B cell (primary cell): ENCODE measurements at regions of chr6 and their contacts with region 1.

Region 1: GRCh38 chr6:137873273-137873762 is 6.3 kb downstream of the TNFAIP3 start:
- DNase-seq: peak; percentile 91
- ATAC-seq: peak; percentile 70
- H3K4me3 ChIP-seq: peak overlapping the region in 2 of 5 experiments; percentile 4 to 17
- H3K4me3 Mint-ChIP-seq: peak overlapping the region; percentile 94
- H3K27ac ChIP-seq: peak overlapping the region; percentile 51 to 96
- H3K27ac Mint-ChIP-seq: peak overlapping the region; percentile 80
- H3K4me1 ChIP-seq: peaks cover 58 to 64% of the 10 kb centered on the region in 2 donors
- H3K4me1 Mint-ChIP-seq: peaks cover 70% of the 10 kb centered on the region
- H3K27me3 ChIP-seq: no peaks in the 10 kb centered on the region
- H3K27me3 Mint-ChIP-seq: no peaks in the 10 kb centered on the region
- CTCF ChIP-seq: no peak

Region 2: DNA sequence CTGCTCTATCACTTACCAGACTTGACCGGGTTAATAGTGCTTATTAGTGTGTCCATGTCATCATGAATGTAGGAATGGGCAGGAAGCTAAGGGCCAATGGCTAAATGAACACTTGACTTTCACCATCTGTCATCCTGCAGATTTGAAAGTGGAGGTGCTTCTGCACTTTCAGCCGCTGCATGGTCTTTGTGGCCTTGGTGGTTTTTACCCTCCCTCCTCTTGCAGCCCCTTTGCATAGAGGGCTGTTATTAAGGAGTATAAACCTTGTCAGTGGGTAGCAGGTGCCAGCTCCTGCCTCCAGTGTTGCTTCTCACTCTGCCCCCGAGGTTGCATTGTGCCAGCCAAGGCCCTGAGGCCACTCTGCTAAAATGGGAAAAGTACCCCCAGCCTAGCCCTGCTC is 128.4 kb before region 1 on chr6:
- CTCF ChIA-PET with region 1: no interaction called
- POLR2A ChIA-PET with region 1: no interaction called
- intact Hi-C with region 1: loop called (anchors 5 kb)
- DNase-seq: peak; percentile 21
- ATAC-seq: no peak
- H3K4me3 ChIP-seq: no peak overlapping the region
- H3K4me3 Mint-ChIP-seq: peak overlapping the region; percentile 8
- H3K27ac ChIP-seq: no peak overlapping the region
- H3K27ac Mint-ChIP-seq: peak overlapping the region; percentile 15
- H3K4me1 ChIP-seq: peaks cover 30 to 36% of the 10 kb centered on the region in 2 donors
- H3K4me1 Mint-ChIP-seq: peaks cover 35% of the 10 kb centered on the region
- H3K27me3 ChIP-seq: no peaks in the 10 kb centered on the region
- H3K27me3 Mint-ChIP-seq: no peaks in the 10 kb centered on the region
- CTCF ChIP-seq: no peak

Region 3: GRCh38 chr6:137903933-137904821 is 30.9 kb after region 1 on chr6:
- CTCF ChIA-PET with region 1: interaction called, 3 read pairs
- POLR2A ChIA-PET with region 1: no interaction called
- intact Hi-C with region 1: loop called (anchors 2 kb)
- DNase-seq: no peak
- ATAC-seq: peak; percentile 47
- H3K4me3 ChIP-seq: peak overlapping the region in 2 of 5 experiments; percentile 31 to 54
- H3K4me3 Mint-ChIP-seq: peak overlapping the region; percentile 79
- H3K27ac ChIP-seq: no peak overlapping the region
- H3K27ac Mint-ChIP-seq: peak overlapping the region; percentile 0
- H3K4me1 ChIP-seq: peaks cover 19 to 23% of the 10 kb centered on the region in 2 donors
- H3K4me1 Mint-ChIP-seq: peaks cover 32% of the 10 kb centered on the region
- H3K27me3 ChIP-seq: no peaks in the 10 kb centered on the region
- H3K27me3 Mint-ChIP-seq: no peaks in the 10 kb centered on the region
- CTCF ChIP-seq: no peak

Region 4: DNA sequence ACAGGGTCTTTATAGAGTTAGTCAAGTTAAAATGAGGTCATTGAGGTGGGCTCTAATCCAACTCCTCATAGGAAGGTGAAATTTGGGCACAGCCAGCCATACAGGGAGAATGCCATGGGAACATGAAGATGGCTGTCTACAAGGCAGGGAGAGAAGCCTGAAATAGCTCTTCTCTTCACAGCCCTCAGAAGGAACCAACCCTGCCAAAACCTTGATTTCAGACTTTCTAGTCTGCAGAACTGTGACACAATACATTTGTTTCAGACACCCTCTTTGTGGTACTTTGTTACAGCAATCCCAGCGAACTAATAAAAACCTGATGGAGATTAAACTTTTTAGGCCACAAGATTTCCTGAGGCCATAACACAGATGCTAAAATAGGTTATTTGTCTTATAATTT is 1218.5 kb after region 1 on chr6:
- CTCF ChIA-PET with region 1: no interaction called
- POLR2A ChIA-PET with region 1: no interaction called
- intact Hi-C with region 1: no loop called
- DNase-seq: no peak
- ATAC-seq: no peak
- H3K4me3 ChIP-seq: no peak overlapping the region
- H3K4me3 Mint-ChIP-seq: no peak overlapping the region
- H3K27ac ChIP-seq: no peak overlapping the region
- H3K27ac Mint-ChIP-seq: no peak overlapping the region
- H3K4me1 ChIP-seq: no peaks in the 10 kb centered on the region
- H3K4me1 Mint-ChIP-seq: no peaks in the 10 kb centered on the region
- H3K27me3 ChIP-seq: no peaks in the 10 kb centered on the region
- H3K27me3 Mint-ChIP-seq: no peaks in the 10 kb centered on the region
- CTCF ChIP-seq: no peak